Astrocyte of the cerebellum (primary cell): ENCODE measurements at regions of chr3 and their contacts with region 1.

Region 1: DNA sequence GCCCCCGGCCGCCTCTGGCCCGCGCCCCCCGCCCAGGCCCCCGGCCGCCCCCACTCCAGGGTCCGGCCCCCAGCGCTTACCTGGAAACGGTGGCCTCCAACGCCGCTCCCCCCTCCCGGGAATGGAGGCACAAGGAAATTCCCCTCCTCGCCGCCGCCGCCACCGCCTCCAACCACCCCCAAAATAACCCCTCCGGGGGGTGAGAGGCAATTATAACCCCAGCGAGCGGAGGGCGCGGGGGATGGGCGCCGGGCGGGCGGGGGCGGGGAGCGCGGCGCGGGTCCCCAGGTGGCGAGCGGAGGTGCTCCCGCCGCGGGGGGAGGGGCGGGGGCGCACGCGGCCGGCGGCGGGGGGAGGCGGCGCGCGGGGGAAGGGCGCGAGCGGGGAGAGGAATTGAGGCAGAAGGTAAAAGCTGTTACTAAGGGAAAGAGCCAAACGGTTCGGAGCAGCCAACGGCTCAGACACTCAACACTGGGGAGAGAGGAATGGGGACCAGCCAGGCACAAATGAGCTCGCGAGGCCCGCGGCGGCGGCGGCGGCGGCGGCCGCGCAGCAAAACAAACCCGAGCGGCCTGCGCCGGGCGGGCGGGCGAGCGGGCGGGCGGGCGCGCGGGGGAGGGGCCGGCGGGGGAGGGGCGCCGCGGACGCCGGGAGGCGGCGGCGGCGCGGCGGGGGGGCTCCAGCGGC is at the start of gene TBL1XR1:
- DNase-seq: peak; percentile 93
- H3K4me3 ChIP-seq: peak within 1 kb of the TSS; percentile 93
- CTCF ChIP-seq: no peak

Region 2: DNA sequence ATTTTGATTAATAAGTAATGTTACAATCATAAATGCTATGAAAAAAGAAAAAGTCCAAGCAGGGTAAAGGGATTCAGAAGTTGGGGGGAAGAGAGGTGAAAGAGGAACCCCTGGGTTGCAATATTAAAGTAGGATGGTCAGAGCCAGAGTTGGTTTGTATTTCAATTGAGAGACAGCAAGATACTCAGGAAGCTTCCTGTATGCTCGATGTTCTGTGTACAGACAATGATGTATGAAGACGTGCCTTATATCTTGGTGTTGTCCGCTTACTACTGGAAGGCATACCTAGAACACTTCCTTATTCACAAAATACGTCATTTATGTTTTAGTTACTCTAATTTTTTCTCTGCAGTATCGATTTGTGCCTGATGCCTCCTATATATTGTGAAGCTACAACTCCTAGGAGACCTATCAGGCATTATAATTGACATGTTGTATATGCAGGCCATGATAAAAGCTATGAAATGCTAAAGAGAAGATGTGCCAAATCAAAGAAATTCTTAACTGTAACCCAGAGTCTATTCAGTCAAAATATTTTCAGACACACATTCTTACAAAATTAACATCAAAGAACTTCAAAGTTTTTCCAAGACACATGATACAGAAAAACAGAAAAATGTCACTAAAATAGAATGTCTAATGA is 87.4 kb before region 1 on chr3:
- in situ Hi-C with region 1: no loop called
- DNase-seq: no peak
- H3K4me3 ChIP-seq: no peak overlapping the region
- CTCF ChIP-seq: no peak

Region 3: DNA sequence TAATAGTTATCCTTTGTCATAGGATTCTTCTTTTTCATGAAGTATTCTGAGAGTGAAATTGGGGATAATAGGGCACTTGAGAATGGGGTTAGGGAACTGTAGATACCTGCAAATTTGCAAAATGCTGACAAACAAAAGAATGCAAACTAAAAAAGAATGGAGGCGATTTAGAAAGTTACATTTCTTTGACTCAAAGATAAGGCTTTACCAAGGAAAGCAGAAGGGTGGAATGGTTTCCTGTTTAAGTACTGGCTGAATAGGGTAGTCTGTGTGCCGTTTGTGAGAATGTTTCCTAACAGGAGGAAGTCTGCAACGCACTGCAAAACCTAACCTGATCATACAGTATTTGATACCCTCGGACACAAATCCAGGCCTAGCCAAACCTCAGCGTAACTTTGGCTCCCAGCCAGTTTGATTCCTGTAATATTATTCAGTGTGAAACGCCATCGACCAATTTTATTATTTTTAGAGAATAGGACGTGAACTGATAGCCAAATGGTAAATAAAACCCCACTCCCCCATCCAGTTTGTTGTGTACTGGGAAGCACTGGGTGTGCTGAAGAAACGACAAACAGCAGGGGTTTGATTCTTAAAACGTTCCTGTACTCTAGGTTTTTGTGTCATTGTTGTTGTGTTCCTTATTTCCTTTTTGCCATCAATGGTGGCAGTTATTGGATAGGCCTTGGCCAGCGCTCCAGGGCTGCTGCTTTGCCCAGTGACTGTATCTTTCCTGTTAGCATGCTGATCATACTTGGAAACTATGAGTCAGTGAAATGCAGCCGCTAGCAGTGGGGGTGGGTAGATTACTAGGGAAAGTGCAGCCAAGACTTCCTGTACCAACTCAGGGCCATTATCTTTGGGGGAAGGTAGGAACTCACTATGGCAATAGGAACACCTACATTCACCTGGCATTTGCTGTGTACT is 148.1 kb after region 1 on chr3:
- in situ Hi-C with region 1: loop called (anchors 25 kb)
- DNase-seq: peak; percentile 89
- H3K4me3 ChIP-seq: no peak overlapping the region
- CTCF ChIP-seq: no peak

Region 4: DNA sequence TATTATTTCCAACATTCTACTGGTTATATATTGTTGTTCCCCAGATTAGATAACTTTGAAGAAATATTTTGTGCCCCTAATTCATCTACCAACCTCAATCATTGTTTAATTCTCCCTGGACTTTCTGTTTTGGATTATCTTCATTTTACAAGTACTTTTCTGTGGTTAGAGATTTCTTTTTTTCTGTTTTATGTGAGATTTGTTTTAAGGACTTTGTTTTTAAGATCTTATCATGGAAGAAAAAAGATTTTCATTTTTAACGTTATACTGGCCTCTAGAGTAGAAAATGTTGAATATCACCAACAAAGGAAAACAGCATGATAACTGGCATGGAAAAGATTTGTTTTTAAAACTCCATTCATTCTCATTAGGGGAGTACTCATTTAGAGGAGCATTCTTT is 1128.1 kb after region 1 on chr3:
- in situ Hi-C with region 1: loop called (anchors 25 kb)
- DNase-seq: peak; percentile 47
- H3K4me3 ChIP-seq: no peak overlapping the region
- CTCF ChIP-seq: no peak